BJ (cell line): ENCODE measurements at regions of chr17 and their contacts with region 1.

Region 1: DNA sequence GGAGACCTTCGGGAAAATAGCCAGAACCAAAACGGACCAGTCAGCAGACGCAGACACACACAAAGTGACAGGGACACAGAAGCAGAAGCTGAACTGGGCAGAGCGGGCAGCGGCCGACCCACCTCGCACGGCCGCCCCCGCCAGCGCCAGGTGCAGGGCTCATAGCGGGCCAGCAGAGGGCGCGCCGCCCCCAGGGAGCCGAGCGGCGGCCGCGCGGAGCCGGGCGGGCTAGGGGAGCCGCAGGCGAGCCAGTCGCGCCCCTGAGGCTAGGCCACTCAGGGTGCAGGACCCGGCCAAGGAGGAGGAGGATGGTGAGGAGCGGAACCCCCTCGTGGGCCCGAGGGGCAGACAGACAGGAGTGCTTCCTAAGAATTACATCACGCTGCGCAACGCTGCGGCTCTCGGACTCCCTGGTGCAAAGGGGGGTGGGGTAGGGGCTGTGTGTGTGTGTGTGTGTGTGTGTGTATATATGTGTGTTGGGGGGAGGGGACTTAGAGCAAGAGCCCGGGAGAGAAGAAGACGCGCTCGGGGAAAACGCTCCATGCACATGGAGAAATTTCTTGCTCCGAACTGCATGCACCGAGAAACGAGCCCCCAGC is 913 bp upstream of the NOG start:
- DNase-seq: no peak
- H3K4me3 ChIP-seq: peak overlapping the region; percentile 49
- H3K27me3 ChIP-seq: peaks cover 21% of the 10 kb centered on the region
- CTCF ChIP-seq: peak; percentile 58

Region 2: GRCh38 chr17:55986817-55987216 is 605.8 kb before region 1 on chr17:
- CTCF ChIA-PET with region 1: no interaction called
- POLR2A ChIA-PET with region 1: no interaction called
- DNase-seq: no peak
- H3K4me3 ChIP-seq: no peak overlapping the region
- H3K27me3 ChIP-seq: no peaks in the 10 kb centered on the region
- CTCF ChIP-seq: no peak

Region 3: GRCh38 chr17:56581635-56582627 is 10.7 kb before region 1 on chr17:
- CTCF ChIA-PET with region 1: interaction called, 19 read pairs
- POLR2A ChIA-PET with region 1: no interaction called
- DNase-seq: no peak
- H3K4me3 ChIP-seq: no peak overlapping the region
- H3K27me3 ChIP-seq: peaks cover 10% of the 10 kb centered on the region
- CTCF ChIP-seq: no peak